Activated CD4-positive, alpha-beta T cell treated with anti-CD3 and anti-CD28 coated beads for 36 hours (primary cell): ENCODE measurements at regions of chr18 and their contacts with region 1.

Region 1: DNA sequence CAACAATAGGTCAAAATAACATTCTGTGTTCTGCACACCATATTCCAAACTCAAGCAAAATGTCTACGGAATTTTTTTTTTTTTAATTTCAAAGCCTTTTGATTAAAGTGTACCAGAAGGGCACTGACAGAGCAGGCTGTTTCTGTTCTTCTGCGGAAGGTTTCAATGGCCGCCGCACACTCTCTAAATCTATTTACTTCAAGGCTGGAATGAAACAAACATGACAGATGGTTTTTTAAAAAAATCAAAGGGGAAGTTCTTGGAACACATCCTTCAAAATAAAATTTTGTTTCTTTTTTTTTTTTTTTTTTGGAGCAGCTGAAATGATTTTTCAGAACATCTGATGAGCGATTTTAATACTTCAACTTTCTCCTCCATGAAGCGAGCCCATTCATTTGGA is 259.1 kb downstream of the TXNL1 start:
- DNase-seq: no peak
- ATAC-seq: no peak
- H3K4me3 Mint-ChIP-seq: no peak overlapping the region
- H3K27ac Mint-ChIP-seq: no peak overlapping the region
- H3K4me1 Mint-ChIP-seq: no peaks in the 10 kb centered on the region
- H3K27me3 Mint-ChIP-seq: no peaks in the 10 kb centered on the region

Region 2: DNA sequence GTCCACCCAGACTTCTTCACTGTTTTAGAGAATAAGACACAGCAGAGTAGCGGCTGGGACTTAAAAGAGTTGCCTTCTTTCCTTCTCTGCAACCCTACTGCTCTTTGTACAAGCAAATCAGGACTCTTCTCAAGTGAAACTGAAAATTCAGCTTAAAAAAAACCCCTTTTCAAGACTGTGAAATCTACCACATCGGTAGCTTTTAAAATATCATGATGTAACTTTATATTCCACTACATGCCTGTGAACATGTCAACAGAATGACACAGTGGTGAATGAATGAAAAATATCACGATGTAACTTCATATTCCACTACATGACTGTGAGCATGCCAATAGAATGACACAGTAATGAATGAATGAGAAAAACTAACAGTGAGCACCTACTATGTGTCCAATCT is 844.7 kb before region 1 on chr18:
- CTCF ChIA-PET with region 1: no interaction called
- POLR2A ChIA-PET with region 1: interaction called, 18 read pairs
- intact Hi-C with region 1: no loop called
- DNase-seq: no peak
- ATAC-seq: peak; percentile 74
- H3K4me3 Mint-ChIP-seq: no peak overlapping the region
- H3K27ac Mint-ChIP-seq: no peak overlapping the region
- H3K4me1 Mint-ChIP-seq: peaks cover 8% of the 10 kb centered on the region
- H3K27me3 Mint-ChIP-seq: no peaks in the 10 kb centered on the region

Region 3: DNA sequence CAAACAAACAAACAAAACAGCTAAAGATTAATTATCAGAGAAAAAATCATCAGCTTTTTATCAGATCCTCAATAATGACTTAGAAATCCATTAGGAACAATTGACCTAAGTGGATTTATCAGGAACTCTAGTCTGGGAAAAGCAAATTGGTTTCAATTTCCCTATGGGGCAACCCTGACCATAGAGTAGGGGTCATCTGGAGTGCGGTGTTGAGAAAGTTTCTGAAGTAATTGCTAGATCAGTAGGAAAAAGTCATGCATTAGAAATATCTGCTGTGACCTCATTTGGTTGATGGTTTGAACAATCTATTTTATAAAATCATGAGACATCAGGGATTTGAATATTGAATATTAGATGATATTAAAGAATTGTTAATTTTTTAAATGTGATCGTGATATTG is 248.8 kb before region 1 on chr18:
- CTCF ChIA-PET with region 1: no interaction called
- POLR2A ChIA-PET with region 1: no interaction called
- intact Hi-C with region 1: no loop called
- DNase-seq: no peak
- ATAC-seq: no peak
- H3K4me3 Mint-ChIP-seq: no peak overlapping the region
- H3K27ac Mint-ChIP-seq: no peak overlapping the region
- H3K4me1 Mint-ChIP-seq: no peaks in the 10 kb centered on the region
- H3K27me3 Mint-ChIP-seq: peaks cover 2% of the 10 kb centered on the region

Region 4: DNA sequence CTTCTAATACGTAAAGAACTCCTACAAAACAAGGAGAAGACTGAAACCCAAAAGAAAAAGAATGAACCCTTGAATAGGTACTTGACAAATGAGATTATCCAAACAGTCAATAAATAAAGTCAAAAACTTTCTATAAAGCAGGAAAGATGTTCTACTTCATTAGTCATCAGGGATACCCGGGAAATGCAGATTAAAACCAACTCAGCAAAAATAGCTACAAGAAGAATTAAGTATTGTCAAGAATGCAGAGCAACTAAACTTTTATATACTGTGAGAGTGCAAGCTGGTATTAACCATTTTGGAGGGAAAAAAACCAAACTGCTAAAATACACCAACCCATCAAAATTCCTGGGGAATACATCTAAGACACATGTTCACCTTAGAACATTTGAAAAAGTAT is 248.7 kb after region 1 on chr18:
- CTCF ChIA-PET with region 1: no interaction called
- POLR2A ChIA-PET with region 1: no interaction called
- intact Hi-C with region 1: no loop called
- DNase-seq: no peak
- ATAC-seq: no peak
- H3K4me3 Mint-ChIP-seq: no peak overlapping the region
- H3K27ac Mint-ChIP-seq: no peak overlapping the region
- H3K4me1 Mint-ChIP-seq: peaks cover 45% of the 10 kb centered on the region
- H3K27me3 Mint-ChIP-seq: no peaks in the 10 kb centered on the region